Posterior cingulate gyrus (tissue), 11 donors: ENCODE measurements at regions of chr7 and their contacts with region 1.

Region 1: GRCh38 chr7:36994456-36995112 is 270.3 kb upstream of the AOAH start:
- DNase-seq: no peak

Region 2: GRCh38 chr7:36929791-36930190 is 64.8 kb before region 1 on chr7:
- intact Hi-C with region 1: no loop called
- DNase-seq: no peak

Region 3: GRCh38 chr7:36967387-36967786 is 27.2 kb before region 1 on chr7:
- intact Hi-C with region 1: no loop called
- DNase-seq: peak in 7 of 10 donors; percentile 31 to 92 (median 61)

Region 4: GRCh38 chr7:37074370-37074769 is 79.8 kb after region 1 on chr7:
- intact Hi-C with region 1: loop called (anchors 10 kb)
- DNase-seq: no peak

Region 5: GRCh38 chr7:37212556-37212955 is 218.0 kb after region 1 on chr7:
- intact Hi-C with region 1: no loop called
- DNase-seq: no peak